Natural killer cell (primary cell): ENCODE measurements at regions of chr22 and their contacts with region 1.

Region 1: DNA sequence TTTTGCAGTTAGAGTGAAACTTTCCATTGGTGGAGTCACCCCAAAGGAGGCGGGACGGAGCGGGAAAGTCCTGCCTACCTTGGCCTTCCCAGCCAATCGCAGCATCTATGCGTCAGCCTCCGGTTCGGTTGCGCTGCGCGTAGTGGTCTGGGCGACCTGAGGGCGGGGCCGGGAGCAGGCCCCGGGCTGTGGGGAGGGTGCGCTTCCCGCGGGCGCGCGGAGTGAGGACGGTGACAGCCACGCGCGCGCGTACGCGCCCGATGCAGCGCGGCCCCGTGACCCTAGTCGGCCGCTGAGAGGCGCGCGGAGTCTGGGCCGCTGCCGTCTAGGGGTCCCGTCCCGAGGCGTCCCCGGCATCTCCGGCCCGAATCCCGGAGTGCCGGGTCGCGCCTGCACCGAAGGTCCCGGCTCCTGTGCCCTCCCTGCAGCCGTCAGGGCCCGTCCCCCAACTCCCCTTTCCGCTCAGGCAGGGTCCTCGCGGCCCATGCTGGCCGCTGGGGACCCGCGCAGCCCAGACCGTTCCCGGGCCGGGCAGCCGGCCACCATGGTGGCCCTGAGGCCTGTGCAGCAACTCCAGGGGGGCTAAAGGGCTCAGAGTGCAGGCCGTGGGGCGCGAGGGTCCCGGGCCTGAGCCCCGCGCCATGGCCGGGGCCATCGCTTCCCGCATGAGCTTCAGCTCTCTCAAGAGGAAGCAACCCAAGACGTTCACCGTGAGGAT is at the start of gene NF2:
- DNase-seq: peak; percentile 98 to 100
- ATAC-seq: peak; percentile 95 to 98 (median 95)
- H3K4me3 ChIP-seq: peak within 1 kb of the TSS; percentile 61
- H3K4me3 Mint-ChIP-seq: peak within 1 kb of the TSS; percentile 94
- H3K27ac ChIP-seq: peak within 1 kb of the TSS; percentile 93
- H3K27ac Mint-ChIP-seq: peak within 1 kb of the TSS; percentile 92 to 94
- H3K4me1 ChIP-seq: peaks cover 16% of the 10 kb centered on the region
- H3K4me1 Mint-ChIP-seq: peaks cover 18 to 26% of the 10 kb centered on the region in 2 donors
- H3K27me3 ChIP-seq: no peaks in the 10 kb centered on the region
- H3K27me3 Mint-ChIP-seq: no peaks in the 10 kb centered on the region
- CTCF ChIP-seq: no peak
- total RNA-seq, gene NF2: 32.4 to 43.8 (median 39.6) TPM

Region 2: GRCh38 chr22:29553351-29554224 is 49.9 kb before region 1 on chr22 and contains the start of gene THOC5:
- intact Hi-C with region 1: loop called (anchors 1 kb)
- DNase-seq: peak; percentile 84 to 93
- ATAC-seq: peak; percentile 95 to 97 (median 95)
- H3K4me3 ChIP-seq: peak within 1 kb of the TSS; percentile 81
- H3K4me3 Mint-ChIP-seq: peak within 1 kb of the TSS; percentile 90
- H3K27ac ChIP-seq: peak within 1 kb of the TSS; percentile 73
- H3K27ac Mint-ChIP-seq: peak within 1 kb of the TSS; percentile 87 to 96
- H3K4me1 ChIP-seq: peaks cover 16% of the 10 kb centered on the region
- H3K4me1 Mint-ChIP-seq: peaks cover 14 to 23% of the 10 kb centered on the region in 2 donors
- H3K27me3 ChIP-seq: no peaks in the 10 kb centered on the region
- H3K27me3 Mint-ChIP-seq: no peaks in the 10 kb centered on the region
- CTCF ChIP-seq: peak; percentile 28
- total RNA-seq, gene THOC5: 42.4 to 62.5 (median 52.6) TPM

Region 3: DNA sequence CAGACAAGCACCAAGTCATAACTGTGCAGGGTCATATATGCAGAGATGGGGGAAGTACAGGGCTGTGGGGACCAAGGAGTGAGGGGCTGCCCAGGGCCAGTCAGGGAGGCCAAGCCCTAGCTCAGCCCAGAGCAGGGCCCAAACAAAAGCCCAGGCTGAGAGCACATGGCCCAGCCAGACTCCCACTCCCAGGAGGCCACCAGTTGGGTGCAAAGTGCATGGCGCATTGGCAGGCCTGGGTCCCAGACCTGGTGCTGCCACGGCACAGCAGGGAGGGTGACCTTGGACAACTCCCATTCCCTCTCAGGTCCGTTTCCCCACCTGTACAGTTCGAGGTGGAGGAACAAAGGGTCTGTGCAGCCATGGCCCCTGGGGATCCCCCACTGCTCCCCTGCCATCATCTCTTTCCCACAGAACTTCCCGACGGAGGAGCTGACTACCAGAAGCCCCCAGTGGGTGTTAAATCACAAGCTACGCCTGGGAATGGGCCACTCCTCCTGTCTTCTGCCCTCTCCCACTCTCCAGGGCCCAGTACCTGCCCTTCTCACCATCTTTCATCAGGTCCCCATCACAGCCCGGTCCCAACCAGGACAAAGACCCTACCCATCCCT is 23.2 kb before region 1 on chr22:
- intact Hi-C with region 1: no loop called
- DNase-seq: peak in 1 of 2 donors; percentile 28
- ATAC-seq: peak in 1 of 3 donors; percentile 1
- H3K4me3 ChIP-seq: peak overlapping the region; percentile 55
- H3K4me3 Mint-ChIP-seq: peak overlapping the region; percentile 94
- H3K27ac ChIP-seq: peak overlapping the region; percentile 18
- H3K27ac Mint-ChIP-seq: peak overlapping the region; percentile 67 to 85
- H3K4me1 ChIP-seq: peaks cover 13% of the 10 kb centered on the region
- H3K4me1 Mint-ChIP-seq: peaks cover 0 to 23% of the 10 kb centered on the region in 2 donors
- H3K27me3 ChIP-seq: no peaks in the 10 kb centered on the region
- H3K27me3 Mint-ChIP-seq: no peaks in the 10 kb centered on the region
- CTCF ChIP-seq: no peak

Region 4: DNA sequence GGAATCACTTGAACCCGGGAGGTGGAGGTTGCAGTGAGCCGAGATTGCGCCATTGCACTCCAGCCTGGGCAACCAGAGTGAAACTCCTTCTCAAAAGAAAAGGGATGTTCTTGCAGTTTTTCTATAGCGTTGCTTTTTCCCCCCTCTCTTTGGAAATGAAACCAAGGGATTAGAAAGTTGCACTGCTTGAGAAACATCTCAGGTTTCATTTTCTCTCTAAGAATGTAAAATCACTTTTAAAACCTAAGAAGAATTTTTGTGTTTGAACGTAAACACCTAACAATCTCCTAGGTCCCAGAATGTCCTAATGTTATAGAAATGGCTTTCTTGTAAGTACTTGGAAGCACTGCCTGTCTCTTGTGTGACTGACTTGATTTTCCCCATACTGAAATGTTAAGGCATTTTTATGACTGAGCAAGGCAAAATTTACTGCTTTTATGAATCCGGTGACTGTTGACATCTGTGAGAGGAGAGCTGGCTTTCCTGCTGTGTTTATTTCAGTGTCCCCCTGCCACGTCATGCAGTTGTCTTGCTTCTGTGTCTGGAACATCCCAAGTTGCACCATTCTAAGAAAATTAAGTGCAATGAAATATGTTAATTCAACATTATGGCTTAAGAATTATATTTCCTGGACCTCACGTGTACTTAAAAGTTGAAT is 37.7 kb after region 1 on chr22:
- intact Hi-C with region 1: no loop called
- DNase-seq: no peak
- ATAC-seq: no peak
- H3K4me3 ChIP-seq: no peak overlapping the region
- H3K4me3 Mint-ChIP-seq: no peak overlapping the region
- H3K27ac ChIP-seq: no peak overlapping the region
- H3K27ac Mint-ChIP-seq: no peak overlapping the region
- H3K4me1 ChIP-seq: peaks cover 17% of the 10 kb centered on the region
- H3K4me1 Mint-ChIP-seq: peaks cover 11 to 13% of the 10 kb centered on the region in 2 donors
- H3K27me3 ChIP-seq: no peaks in the 10 kb centered on the region
- H3K27me3 Mint-ChIP-seq: no peaks in the 10 kb centered on the region
- CTCF ChIP-seq: no peak

Region 5: GRCh38 chr22:29766632-29767170 is 163.2 kb after region 1 on chr22 and contains the start of gene ZMAT5:
- intact Hi-C with region 1: loop called (anchors 10 kb)
- DNase-seq: peak; percentile 73 to 97
- ATAC-seq: peak; percentile 90 to 95 (median 93)
- H3K4me3 ChIP-seq: peak within 1 kb of the TSS; percentile 72
- H3K4me3 Mint-ChIP-seq: peak within 1 kb of the TSS; percentile 95
- H3K27ac ChIP-seq: peak within 1 kb of the TSS; percentile 81
- H3K27ac Mint-ChIP-seq: peak within 1 kb of the TSS; percentile 93 to 99
- H3K4me1 ChIP-seq: peaks cover 23% of the 10 kb centered on the region
- H3K4me1 Mint-ChIP-seq: peaks cover 34 to 37% of the 10 kb centered on the region in 2 donors
- H3K27me3 ChIP-seq: no peaks in the 10 kb centered on the region
- H3K27me3 Mint-ChIP-seq: no peaks in the 10 kb centered on the region
- CTCF ChIP-seq: no peak
- total RNA-seq, gene ZMAT5: 15.9 to 20.0 (median 16.0) TPM